ENCODE measurements at regions of chr6 and their contacts with region 1.

Region 1: DNA sequence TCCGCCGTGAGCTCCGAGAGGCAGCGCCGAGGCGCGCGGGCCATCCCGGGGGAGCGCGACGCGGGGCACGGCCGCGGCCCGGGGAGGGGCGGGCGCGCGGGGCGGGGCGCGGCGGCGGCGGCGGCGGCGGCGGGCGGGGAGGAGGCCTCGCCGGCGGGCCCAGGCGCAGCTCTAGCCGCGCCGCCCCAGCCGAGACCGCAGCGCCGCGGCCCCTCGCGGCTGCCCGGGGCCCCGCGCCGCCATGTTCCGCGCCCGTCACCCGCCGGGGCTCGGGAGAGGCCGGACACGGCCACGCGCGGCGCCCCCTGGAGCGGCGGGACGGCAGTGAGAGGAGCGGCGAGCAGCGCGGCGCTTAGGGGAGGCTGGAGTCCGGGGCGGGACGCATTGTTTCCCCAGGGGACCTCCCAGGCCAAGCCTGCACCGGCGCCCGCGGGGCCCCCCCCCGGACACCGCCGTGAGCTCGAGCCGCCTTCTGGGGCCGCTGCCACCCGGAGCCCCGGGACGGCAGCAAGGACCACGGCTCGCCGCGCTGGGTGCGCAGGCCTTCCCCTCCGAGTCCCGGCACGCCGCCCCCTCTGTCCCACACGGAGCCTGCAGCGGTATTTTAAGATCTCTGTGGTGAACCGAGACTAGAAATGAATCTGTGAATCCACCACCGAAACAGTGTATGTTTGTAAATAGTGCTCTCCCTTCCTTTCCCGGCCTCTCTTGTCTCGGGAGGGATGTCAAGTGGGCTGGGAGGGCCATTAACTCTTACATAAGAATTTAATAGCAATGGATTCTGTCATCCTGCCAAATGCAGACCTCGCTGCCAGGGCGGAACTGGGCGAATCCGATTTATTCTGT is at the start of gene KIF13A:
- DNase-seq: peak; percentile 66 to 82 (median 75)
- H3K4me3 ChIP-seq: peak within 1 kb of the TSS; percentile 89
- H3K27ac ChIP-seq: peak within 1 kb of the TSS; percentile 94 to 96
- H3K4me1 ChIP-seq: peaks cover 2% of the 10 kb centered on the region
- H3K27me3 ChIP-seq: no peaks in the 10 kb centered on the region
- CTCF ChIP-seq: peak in 2 of 3 donors; percentile 41 to 48
- EP300 ChIP-seq: no peak
- POLR2A ChIP-seq: peak; percentile 11
- total RNA-seq, gene KIF13A: 19.6 to 44.4 (median 38.3) TPM

Region 2: GRCh38 chr6:17470938-17471327 is 516.9 kb before region 1 on chr6:
- intact Hi-C with region 1: loop called in 1 of 4 experiments (anchors 5 kb)
- DNase-seq: no peak
- H3K4me3 ChIP-seq: no peak overlapping the region
- H3K27ac ChIP-seq: no peak overlapping the region
- H3K4me1 ChIP-seq: no peaks in the 10 kb centered on the region
- H3K27me3 ChIP-seq: no peaks in the 10 kb centered on the region
- CTCF ChIP-seq: no peak
- EP300 ChIP-seq: no peak
- POLR2A ChIP-seq: no peak

Region 3: DNA sequence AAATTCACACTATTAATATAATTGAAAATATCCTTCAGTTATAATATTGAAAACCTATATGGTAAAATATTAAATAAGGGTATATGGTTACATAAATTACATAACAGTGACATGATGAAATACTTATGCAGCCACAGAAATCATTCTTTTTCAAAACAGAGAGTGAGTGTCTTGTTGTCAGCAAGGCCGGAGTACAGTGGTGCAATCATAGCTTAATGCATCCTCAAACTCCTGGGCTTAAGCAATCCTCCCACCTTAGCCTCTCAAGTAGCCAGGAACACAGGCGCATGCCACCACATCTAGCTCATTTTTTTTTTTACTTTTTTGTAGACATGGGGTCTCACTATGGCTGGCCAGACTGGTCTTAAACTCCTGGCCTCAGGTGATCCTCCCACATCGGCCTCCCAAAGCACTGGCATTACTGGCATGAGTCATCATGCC is 347.3 kb before region 1 on chr6:
- intact Hi-C with region 1: no loop called
- DNase-seq: no peak
- H3K4me3 ChIP-seq: no peak overlapping the region
- H3K27ac ChIP-seq: no peak overlapping the region
- H3K4me1 ChIP-seq: no peaks in the 10 kb centered on the region
- H3K27me3 ChIP-seq: no peaks in the 10 kb centered on the region
- CTCF ChIP-seq: no peak
- EP300 ChIP-seq: no peak
- POLR2A ChIP-seq: no peak

Region 4: GRCh38 chr6:17886891-17887290 is 100.9 kb before region 1 on chr6:
- intact Hi-C with region 1: no loop called
- DNase-seq: no peak
- H3K4me3 ChIP-seq: no peak overlapping the region
- H3K27ac ChIP-seq: no peak overlapping the region
- H3K4me1 ChIP-seq: no peaks in the 10 kb centered on the region
- H3K27me3 ChIP-seq: no peaks in the 10 kb centered on the region
- CTCF ChIP-seq: no peak
- EP300 ChIP-seq: no peak
- POLR2A ChIP-seq: no peak

Region 5: DNA sequence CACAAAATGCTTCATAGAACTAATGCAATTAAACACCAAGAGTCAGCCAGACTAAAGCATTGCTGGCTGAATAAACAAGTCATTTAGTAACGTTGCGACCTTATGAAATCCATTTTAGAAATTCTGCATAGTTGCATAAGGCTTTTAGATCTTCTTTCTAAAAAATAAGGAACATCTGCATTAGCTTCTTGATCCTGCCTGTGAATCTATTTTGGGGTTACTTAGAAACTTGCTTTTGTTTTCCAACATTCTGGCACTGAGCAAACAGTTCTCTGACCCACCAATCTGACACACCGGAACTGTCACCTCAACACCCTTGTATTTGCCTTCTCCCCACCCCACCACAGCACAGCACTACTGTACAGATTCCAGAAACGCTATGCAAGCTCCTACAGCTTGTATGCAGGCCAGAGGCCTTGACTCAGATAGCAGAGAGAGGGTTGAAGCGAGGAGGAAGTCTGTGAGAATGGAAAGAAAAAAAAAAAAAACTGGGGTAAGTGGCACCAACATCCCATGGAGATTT is 55.4 kb before region 1 on chr6:
- intact Hi-C with region 1: loop called in 1 of 4 experiments (anchors 10 kb)
- DNase-seq: peak in 3 of 5 donors; percentile 22 to 44 (median 25)
- H3K4me3 ChIP-seq: no peak overlapping the region
- H3K27ac ChIP-seq: no peak overlapping the region
- H3K4me1 ChIP-seq: peaks cover 25% of the 10 kb centered on the region
- H3K27me3 ChIP-seq: no peaks in the 10 kb centered on the region
- CTCF ChIP-seq: no peak
- EP300 ChIP-seq: no peak
- POLR2A ChIP-seq: no peak

Region 6: DNA sequence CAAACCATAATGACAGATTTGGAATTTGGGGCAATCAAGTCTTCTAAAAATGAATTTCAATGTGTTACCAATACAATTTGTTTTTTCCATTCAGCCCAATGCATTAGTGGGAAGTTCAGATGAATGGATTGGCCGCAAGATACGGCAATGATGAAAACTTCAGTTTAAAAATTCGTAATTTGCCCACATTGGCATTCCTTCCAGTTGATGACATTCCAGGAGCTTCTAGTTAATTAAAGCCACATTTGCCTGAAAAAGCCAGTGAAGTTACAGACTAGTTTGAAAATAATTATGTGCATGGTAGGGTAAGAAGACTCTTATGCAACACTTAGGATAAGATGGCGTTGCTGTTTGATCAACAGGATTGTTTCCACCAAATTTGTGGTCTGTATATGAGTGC is 88.4 kb after region 1 on chr6:
- intact Hi-C with region 1: no loop called
- DNase-seq: no peak
- H3K4me3 ChIP-seq: no peak overlapping the region
- H3K27ac ChIP-seq: no peak overlapping the region
- H3K4me1 ChIP-seq: no peaks in the 10 kb centered on the region
- H3K27me3 ChIP-seq: no peaks in the 10 kb centered on the region
- CTCF ChIP-seq: no peak
- EP300 ChIP-seq: no peak
- POLR2A ChIP-seq: no peak

Region 7: DNA sequence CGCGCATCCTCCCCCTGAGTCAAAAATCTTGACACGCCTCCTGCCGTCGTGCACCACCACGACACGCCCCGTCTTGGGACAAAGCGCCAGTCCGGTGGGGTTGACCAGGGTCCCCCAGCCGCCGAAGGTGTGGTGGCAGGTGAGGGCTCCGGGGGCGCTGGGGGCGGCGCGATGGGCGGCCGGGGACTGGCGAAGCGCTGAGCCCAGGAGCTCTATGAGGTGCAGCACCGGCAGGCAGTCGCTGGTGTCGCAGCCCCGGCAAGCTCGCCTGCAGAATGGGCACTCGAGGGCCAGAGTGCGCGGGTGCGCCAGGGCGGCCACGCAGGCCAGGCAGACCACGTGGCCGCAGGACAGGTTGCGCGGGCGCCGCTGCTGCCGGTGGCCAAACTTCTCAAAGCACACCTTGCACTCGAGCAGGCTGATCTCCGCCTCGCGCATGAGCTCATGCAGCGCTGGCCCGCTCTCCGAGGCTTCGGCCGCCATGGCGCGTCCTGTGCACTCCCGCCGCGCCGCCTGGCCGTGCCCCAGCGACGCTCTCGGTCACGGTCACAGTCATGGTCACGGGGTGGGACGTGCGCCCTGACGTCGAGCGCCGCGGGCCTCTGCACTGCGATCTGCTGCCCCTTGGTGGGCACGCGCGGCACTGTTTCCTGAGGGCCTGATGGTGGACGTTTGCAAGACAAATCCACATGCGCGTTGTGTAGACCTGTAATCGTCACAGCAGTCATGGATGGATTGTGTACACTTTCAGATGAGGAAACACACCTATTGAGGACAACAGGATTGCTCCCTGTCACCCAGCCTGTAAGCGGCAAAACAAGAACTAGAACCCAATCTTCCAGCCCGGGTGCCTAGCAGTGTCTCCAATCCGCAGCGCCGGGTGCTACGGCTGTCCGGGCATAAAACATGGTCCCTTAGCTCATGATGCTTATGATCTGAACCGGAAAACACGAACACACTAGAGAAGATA is 134.6 kb after region 1 on chr6 and contains the start of gene NHLRC1:
- intact Hi-C with region 1: loop called in 1 of 4 experiments (anchors 5 kb)
- DNase-seq: peak; percentile 81 to 89 (median 84)
- H3K4me3 ChIP-seq: peak within 1 kb of the TSS; percentile 60
- H3K27ac ChIP-seq: no peak within 1 kb of the TSS
- H3K4me1 ChIP-seq: peaks cover 3% of the 10 kb centered on the region
- H3K27me3 ChIP-seq: no peaks in the 10 kb centered on the region
- CTCF ChIP-seq: peak; percentile 73 to 91 (median 86)
- EP300 ChIP-seq: no peak
- POLR2A ChIP-seq: peak; percentile 20
- total RNA-seq, gene NHLRC1: 0.46 to 1.7 (median 1.2) TPM

Measured in ovary (tissue), 10 donors.